Transverse colon (tissue), 4 donors: ENCODE measurements at regions of chr14 and their contacts with region 1.

Region 1: GRCh38 chr14:87542288-87542687 is 450.7 kb downstream of the GALC start:
- DNase-seq: no peak
- H3K4me3 ChIP-seq: no peak overlapping the region
- H3K27ac ChIP-seq: no peak overlapping the region
- H3K4me1 ChIP-seq: no peaks in the 10 kb centered on the region
- H3K27me3 ChIP-seq: no peaks in the 10 kb centered on the region
- CTCF ChIP-seq: no peak
- EP300 ChIP-seq: no peak
- POLR2A ChIP-seq: no peak

Region 2: GRCh38 chr14:86847140-86847539 is 695.1 kb before region 1 on chr14:
- in situ Hi-C with region 1: no loop called
- intact Hi-C with region 1: loop called (anchors 5 kb)
- DNase-seq: no peak
- H3K4me3 ChIP-seq: no peak overlapping the region
- H3K27ac ChIP-seq: no peak overlapping the region
- H3K4me1 ChIP-seq: no peaks in the 10 kb centered on the region
- H3K27me3 ChIP-seq: no peaks in the 10 kb centered on the region
- CTCF ChIP-seq: no peak
- EP300 ChIP-seq: no peak
- POLR2A ChIP-seq: no peak